ENCODE measurements at regions of chr17 and their contacts with region 1.

Region 1: DNA sequence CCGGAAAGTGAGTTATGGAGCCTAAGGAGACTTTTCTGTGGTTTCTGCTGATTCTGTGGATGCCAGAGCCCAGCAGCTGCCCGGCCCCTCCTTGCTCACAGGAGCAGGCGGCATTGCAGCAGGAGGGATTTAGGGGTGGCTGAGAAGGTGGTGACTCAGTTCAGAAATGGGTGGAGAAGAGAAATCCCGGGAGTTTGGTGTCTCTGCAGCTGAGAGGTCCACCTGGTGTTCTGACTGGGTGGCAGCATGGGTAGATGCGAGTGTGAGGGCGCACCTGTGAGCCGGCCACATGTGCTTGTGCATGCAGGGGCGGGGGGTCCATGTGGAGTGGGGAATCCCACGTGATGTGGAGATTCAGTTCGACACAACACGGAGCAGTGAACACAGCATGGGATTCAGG is 16.1 kb upstream of the SPPL2C start:
- DNase-seq: no peak
- H3K4me3 ChIP-seq: no peak overlapping the region
- H3K27ac ChIP-seq: no peak overlapping the region
- H3K4me1 ChIP-seq: no peaks in the 10 kb centered on the region
- H3K27me3 ChIP-seq: no peaks in the 10 kb centered on the region
- CTCF ChIP-seq: no peak

Region 2: GRCh38 chr17:45640141-45640850 is 188.3 kb before region 1 on chr17:
- CTCF ChIA-PET with region 1: interaction called, 10 read pairs
- POLR2A ChIA-PET with region 1: no interaction called
- intact Hi-C with region 1: loop called (anchors 1 kb)
- DNase-seq: peak; percentile 74
- H3K4me3 ChIP-seq: no peak overlapping the region
- H3K27ac ChIP-seq: no peak overlapping the region
- H3K4me1 ChIP-seq: no peaks in the 10 kb centered on the region
- H3K27me3 ChIP-seq: no peaks in the 10 kb centered on the region
- CTCF ChIP-seq: peak; percentile 85

Region 3: DNA sequence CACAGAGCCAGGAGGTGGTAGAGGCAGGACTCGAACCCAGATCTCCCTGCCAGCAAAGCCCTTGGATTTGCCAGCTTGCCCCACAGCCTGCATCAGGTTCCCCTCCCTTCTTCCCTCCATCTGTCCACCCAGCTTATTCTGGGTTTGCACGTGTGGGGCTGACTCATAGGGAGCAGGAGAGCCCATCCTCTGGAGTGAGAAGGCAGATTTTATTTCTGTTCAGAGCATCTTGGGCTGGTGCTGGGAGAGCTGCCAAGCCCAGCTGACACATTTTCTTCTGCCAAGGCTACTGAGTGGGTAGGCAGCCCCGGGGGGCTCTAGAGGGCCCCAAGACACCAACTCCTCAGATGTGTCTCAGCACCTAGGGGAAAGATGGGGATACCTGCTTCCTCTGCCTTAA is 150.9 kb before region 1 on chr17:
- CTCF ChIA-PET with region 1: no interaction called
- POLR2A ChIA-PET with region 1: no interaction called
- intact Hi-C with region 1: no loop called
- DNase-seq: no peak
- H3K4me3 ChIP-seq: no peak overlapping the region
- H3K27ac ChIP-seq: no peak overlapping the region
- H3K4me1 ChIP-seq: no peaks in the 10 kb centered on the region
- H3K27me3 ChIP-seq: no peaks in the 10 kb centered on the region
- CTCF ChIP-seq: no peak

Region 4: DNA sequence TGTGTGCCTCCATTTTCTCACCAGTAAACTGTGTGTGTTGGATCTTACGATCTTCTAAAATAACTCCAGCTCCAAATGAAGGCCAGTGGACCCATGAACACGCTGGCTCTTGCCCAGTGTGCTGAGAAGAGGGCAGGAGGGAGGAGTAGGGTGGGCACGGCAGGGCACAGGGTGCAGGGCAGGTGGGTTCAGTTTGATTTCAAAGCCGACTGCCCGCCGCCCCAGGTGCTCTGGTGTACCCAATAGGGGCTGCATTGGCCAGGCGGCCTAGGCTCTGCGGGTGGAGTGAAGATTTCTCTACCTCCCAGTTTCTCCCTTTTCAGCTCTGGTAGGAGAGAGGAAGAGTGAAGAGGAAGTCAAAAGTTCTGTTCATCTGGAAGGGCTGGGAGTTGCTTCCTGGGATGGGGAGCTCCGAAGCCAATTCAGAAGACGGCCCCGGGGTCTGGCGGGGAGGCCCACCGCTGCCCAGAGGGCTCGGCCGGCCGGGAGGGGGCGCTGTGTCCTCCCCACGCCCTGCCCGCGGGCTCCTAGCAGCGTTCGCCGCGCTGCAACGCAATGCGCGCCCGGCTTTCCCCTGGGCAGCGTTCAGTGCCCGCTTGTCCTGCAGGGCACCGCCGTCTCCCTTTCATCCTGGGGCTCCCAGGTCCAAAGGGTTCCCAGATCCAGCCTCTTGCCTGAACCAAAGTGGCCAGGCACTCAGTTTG is 45.6 kb before region 1 on chr17:
- CTCF ChIA-PET with region 1: no interaction called
- POLR2A ChIA-PET with region 1: no interaction called
- intact Hi-C with region 1: no loop called
- DNase-seq: peak; percentile 58
- H3K4me3 ChIP-seq: peak overlapping the region; percentile 40
- H3K27ac ChIP-seq: no peak overlapping the region
- H3K4me1 ChIP-seq: no peaks in the 10 kb centered on the region
- H3K27me3 ChIP-seq: peaks cover 15% of the 10 kb centered on the region
- CTCF ChIP-seq: peak; percentile 59; the same call in 1 of the 2 replicates